ENCODE measurements at regions of chr11 and their contacts with region 1.

Region 1: DNA sequence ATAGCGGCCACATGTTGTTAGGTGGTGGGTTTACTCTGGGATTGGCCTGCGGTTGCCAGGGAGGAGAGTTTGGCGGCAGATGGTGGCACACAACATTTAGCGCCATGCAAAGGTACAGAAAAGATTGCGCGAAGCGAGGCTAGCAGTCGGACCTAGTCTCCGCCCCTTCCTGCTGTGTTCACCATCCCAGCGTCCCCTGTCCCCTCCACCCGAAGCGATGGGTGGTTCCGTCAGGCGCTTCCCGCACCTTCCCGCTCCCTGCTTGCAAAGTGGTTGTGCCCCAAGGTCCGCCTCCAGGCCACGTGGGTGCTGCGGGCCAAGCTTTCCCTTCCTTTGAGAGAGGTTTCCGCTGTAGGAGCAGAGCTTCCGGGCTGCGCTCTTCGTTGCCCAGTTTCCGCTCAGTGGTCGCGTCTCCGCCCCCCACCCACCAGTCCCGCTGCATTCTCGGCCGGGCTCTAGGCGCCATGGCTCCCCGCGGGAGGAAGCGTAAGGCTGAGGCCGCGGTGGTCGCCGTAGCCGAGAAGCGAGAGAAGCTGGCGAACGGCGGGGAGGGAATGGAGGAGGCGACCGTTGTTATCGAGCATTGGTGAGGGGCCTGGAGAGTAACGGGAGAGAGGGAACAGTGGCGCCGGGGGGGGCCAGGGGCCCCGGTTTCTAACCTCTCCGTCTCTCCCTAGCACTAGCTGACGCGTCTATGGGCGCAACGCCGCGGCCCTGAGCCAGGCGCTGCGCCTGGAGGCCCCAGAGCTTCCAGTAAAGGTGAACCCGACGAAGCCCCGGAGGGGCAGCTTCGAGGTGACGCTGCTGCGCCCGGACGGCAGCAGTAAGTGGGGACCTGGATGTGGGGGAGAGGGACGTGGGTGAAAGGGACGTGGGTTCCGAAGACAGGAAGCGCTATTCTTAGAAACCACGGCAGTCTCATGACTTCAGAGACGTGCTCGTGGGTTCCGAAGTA is at the start of gene SELENOH:
- DNase-seq: peak; percentile 97
- H3K4me3 ChIP-seq: peak within 1 kb of the TSS; percentile 73 to 87
- H3K27ac ChIP-seq: peak within 1 kb of the TSS; percentile 89 to 91
- H3K4me1 ChIP-seq: peaks cover 11% of the 10 kb centered on the region
- H3K27me3 ChIP-seq: no peaks in the 10 kb centered on the region
- CTCF ChIP-seq: no peak
- POLR2A ChIP-seq: no peak
- total RNA-seq, gene SELENOH: 157 to 222 TPM

Region 2: GRCh38 chr11:57530596-57531507 is 210.6 kb before region 1 on chr11 and contains the start of gene TIMM10:
- intact Hi-C with region 1: no loop called
- DNase-seq: peak; percentile 98
- H3K4me3 ChIP-seq: peak within 1 kb of the TSS; percentile 73 to 77
- H3K27ac ChIP-seq: peak within 1 kb of the TSS in 1 of 2 donors; percentile 60
- H3K4me1 ChIP-seq: peaks cover 13% of the 10 kb centered on the region
- H3K27me3 ChIP-seq: no peaks in the 10 kb centered on the region
- CTCF ChIP-seq: no peak
- POLR2A ChIP-seq: no peak
- total RNA-seq, gene TIMM10: 27.7 to 49.1 TPM

Region 3: GRCh38 chr11:57800444-57801182 is 59.2 kb after region 1 on chr11:
- intact Hi-C with region 1: loop called (anchors 10 kb)
- DNase-seq: no peak
- H3K4me3 ChIP-seq: no peak overlapping the region
- H3K27ac ChIP-seq: peak overlapping the region; percentile 19 to 28
- H3K4me1 ChIP-seq: peaks cover 35% of the 10 kb centered on the region
- H3K27me3 ChIP-seq: no peaks in the 10 kb centered on the region
- CTCF ChIP-seq: peak; percentile 84 to 93 (median 90)
- POLR2A ChIP-seq: no peak

Measured in testis (tissue), 5 donors.